ENCODE measurements at regions of chrX and their contacts with region 1.

Region 1: GRCh38 chrX:56764153-56764974 is 35.3 kb downstream of the NBDY start:
- DNase-seq: peak; percentile 92
- H3K4me3 Mint-ChIP-seq: peak overlapping the region; percentile 85
- H3K27ac Mint-ChIP-seq: peak overlapping the region; percentile 96
- H3K4me1 Mint-ChIP-seq: peaks cover 46% of the 10 kb centered on the region
- H3K27me3 Mint-ChIP-seq: no peaks in the 10 kb centered on the region

Region 2: DNA sequence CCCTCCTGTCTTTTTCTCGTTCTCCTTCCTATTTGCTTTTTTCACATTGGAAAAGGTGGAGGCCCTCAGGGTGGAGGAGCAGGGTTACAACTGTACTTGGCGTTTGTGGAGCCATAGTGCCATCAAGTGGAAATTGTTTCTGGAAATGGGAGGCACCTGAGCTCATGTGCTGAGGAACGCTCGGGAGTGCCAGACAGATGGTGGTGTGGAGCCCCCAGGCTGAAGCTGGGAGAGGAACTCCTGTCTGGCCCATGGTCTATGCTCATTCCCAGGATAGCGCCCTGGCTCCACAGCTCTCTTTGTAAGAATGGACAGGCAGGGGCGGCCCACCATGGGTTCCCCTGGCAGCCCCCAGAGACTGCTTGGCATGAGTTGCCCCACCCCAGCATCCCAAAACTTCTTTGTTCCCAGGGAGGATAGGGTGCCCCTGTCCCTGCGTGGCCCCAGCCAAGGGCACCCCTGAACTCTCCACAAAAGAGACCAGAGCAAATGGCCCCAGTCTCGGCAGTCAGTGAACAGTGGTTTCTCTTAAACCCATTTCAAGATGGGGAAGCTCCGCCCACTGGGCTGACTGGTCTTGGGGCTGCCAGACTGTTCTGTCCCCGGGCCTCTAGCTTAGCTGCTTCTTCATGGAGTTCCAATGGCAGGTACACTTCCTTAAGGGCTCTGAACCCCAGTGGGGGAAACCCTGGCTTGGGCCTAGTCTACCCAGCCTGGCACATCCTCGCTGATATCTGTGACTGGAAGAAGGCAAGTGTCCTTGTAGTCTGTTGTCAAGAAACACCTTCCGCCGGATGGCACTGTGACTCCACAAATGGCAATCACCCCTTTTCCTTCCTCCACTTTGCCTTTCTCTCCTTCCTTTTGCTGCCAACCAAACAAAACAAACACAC is 34.7 kb after region 1 on chrX:
- intact Hi-C with region 1: no loop called
- DNase-seq: peak; percentile 65
- H3K4me3 Mint-ChIP-seq: peak overlapping the region; percentile 51
- H3K27ac Mint-ChIP-seq: peak overlapping the region; percentile 75
- H3K4me1 Mint-ChIP-seq: peaks cover 46% of the 10 kb centered on the region
- H3K27me3 Mint-ChIP-seq: no peaks in the 10 kb centered on the region

Region 3: DNA sequence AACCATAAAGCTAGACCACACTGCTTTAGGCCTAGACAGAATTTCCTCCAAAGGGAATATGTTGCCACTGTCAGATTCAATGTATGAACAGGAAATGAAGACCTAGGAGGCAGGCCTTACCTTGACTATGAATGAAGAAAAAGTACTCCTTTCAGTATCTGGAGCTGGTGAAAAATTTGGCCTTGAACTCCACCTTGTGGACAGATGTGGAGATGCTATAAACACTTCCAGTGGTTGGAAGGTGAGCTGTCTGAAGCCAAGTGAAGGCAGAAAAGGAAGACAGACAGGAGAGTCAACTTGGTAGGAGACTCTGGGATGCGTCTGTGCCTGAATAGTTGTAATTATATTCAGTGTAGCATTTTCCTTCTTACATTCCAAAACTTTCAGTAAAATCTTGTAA is 213.8 kb after region 1 on chrX:
- intact Hi-C with region 1: loop called (anchors 1 kb)
- DNase-seq: peak; percentile 83
- H3K4me3 Mint-ChIP-seq: no peak overlapping the region
- H3K27ac Mint-ChIP-seq: no peak overlapping the region
- H3K4me1 Mint-ChIP-seq: peaks cover 2% of the 10 kb centered on the region
- H3K27me3 Mint-ChIP-seq: no peaks in the 10 kb centered on the region

Region 4: GRCh38 chrX:57121162-57121741 is 356.9 kb after region 1 on chrX and contains the start of gene SPIN2B:
- intact Hi-C with region 1: loop called (anchors 10 kb)
- DNase-seq: peak; percentile 93
- H3K4me3 Mint-ChIP-seq: peak within 1 kb of the TSS; percentile 93
- H3K27ac Mint-ChIP-seq: peak within 1 kb of the TSS; percentile 90
- H3K4me1 Mint-ChIP-seq: peaks cover 8% of the 10 kb centered on the region
- H3K27me3 Mint-ChIP-seq: no peaks in the 10 kb centered on the region
- total RNA-seq, gene SPIN2B: 8.7 and 9.5 TPM in 2 replicates

Region 5: GRCh38 chrX:57313583-57314215 is 549.3 kb after region 1 on chrX:
- intact Hi-C with region 1: no loop called
- DNase-seq: no peak
- H3K4me3 Mint-ChIP-seq: peak overlapping the region; percentile 46
- H3K27ac Mint-ChIP-seq: peak overlapping the region; percentile 74
- H3K4me1 Mint-ChIP-seq: peaks cover 14% of the 10 kb centered on the region
- H3K27me3 Mint-ChIP-seq: no peaks in the 10 kb centered on the region

Region 6: GRCh38 chrX:57453901-57454300 is 689.5 kb after region 1 on chrX:
- intact Hi-C with region 1: loop called (anchors 5 kb)
- DNase-seq: peak; percentile 67
- H3K4me3 Mint-ChIP-seq: no peak overlapping the region
- H3K27ac Mint-ChIP-seq: no peak overlapping the region
- H3K4me1 Mint-ChIP-seq: peaks cover 4% of the 10 kb centered on the region
- H3K27me3 Mint-ChIP-seq: no peaks in the 10 kb centered on the region

Region 7: DNA sequence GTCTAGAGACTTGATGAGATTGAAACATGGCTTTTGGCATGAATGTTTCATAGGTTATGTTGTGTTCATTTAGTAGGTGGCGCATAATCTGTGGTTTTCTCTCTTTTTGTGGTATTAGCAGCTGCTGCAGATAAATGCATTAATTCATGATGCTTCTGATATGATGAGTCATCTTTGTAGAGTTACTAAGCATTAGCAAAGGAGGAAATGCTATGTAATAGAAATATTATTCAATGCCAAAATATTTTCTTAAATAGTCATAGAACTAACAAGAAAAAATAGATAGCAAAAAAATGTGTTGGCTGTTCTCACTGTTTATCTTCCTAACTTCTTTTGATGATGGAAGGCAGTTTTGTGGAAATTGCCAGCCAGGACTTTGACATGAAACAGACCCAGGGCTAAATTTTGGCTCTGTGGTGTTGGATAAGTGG is 831.0 kb after region 1 on chrX:
- intact Hi-C with region 1: loop called (anchors 5 kb)
- DNase-seq: no peak
- H3K4me3 Mint-ChIP-seq: peak overlapping the region; percentile 74
- H3K27ac Mint-ChIP-seq: no peak overlapping the region
- H3K4me1 Mint-ChIP-seq: peaks cover 19% of the 10 kb centered on the region
- H3K27me3 Mint-ChIP-seq: no peaks in the 10 kb centered on the region

Region 8: GRCh38 chrX:57918750-57919436 is 1154.5 kb after region 1 on chrX:
- intact Hi-C with region 1: loop called (anchors 10 kb)
- DNase-seq: peak; percentile 81
- H3K4me3 Mint-ChIP-seq: no peak overlapping the region
- H3K27ac Mint-ChIP-seq: no peak overlapping the region
- H3K4me1 Mint-ChIP-seq: no peaks in the 10 kb centered on the region
- H3K27me3 Mint-ChIP-seq: no peaks in the 10 kb centered on the region

Measured in activated CD4-positive, alpha-beta T cell treated with anti-CD3 and anti-CD28 coated beads, Interleukin-2, amount 10 ng/mL, durations not matched to agents 24 days and 14 days (primary cell).